Heart left ventricle (tissue), 16 donors: ENCODE measurements at regions of chr22 and their contacts with region 1.

Region 1: GRCh38 chr22:31496007-31496734 is at the start of gene SFI1:
- DNase-seq: peak; percentile 92 to 96 (median 93)
- ATAC-seq: peak; percentile 92 to 98 (median 97)
- H3K4me3 ChIP-seq: peak within 1 kb of the TSS; percentile 53 to 95 (median 84)
- H3K27ac ChIP-seq: peak within 1 kb of the TSS in 11 of 12 donors; percentile 65 to 93 (median 83)
- H3K4me1 ChIP-seq: peaks cover 2 to 28% (median 13%) of the 10 kb centered on the region in 12 donors
- H3K27me3 ChIP-seq: no peaks in the 10 kb centered on the region
- CTCF ChIP-seq: peak in 9 of 12 donors; percentile 14 to 59 (median 37)
- POLR2A ChIP-seq: peak in 1 of 2 donors; percentile 52
- total RNA-seq, gene SFI1: 2.2 to 18.3 (median 6.4) TPM

Region 2: DNA sequence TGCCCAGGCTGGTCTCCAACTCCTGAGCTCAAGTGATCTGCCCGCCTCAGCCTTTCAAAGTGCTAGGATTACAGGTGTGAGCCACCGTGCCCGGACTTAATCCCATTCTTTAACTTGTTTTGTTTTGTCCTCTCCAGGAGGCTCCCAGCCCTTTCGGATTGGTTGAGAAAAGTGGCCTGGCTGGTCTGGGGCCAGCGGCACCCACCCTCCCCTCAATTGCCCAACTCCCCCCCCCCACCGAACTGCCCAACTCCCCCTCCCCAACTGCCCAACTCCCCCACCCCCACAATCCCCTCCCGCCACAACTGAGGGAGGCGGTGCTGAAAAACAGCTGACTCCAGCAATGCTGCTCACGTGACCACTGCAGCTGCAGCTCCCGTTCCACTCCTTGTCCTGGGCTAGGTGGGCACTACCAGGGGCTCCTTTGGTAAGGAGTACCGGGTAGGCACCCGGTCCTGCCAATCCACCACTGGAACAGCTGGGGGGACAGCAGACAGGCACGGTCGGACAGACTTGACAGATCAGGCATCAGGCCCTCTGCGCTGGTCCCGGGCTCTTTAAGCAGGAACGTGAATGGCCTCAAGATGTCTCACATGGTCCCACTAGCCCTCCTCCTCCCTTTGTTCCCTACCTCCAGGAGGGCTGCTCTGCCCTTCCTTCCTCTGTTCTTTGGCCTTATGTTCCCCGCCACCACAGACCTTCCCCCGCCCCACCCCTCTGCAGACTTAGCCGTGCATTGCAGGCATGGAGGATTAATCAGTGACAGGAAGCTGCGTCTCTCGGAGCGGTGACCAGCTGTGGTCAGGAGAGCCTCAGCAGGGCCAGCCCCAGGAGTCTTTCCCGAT is 889.5 kb before region 1 on chr22 and contains the start of gene TCN2:
- intact Hi-C with region 1: loop called in 1 of 10 experiments (anchors 10 kb)
- DNase-seq: peak; percentile 72 to 80 (median 77)
- ATAC-seq: peak; percentile 81 to 90 (median 85)
- H3K4me3 ChIP-seq: peak within 1 kb of the TSS; percentile 30 to 80 (median 66)
- H3K27ac ChIP-seq: peak within 1 kb of the TSS; percentile 45 to 89 (median 80)
- H3K4me1 ChIP-seq: peaks cover 0 to 58% (median 34%) of the 10 kb centered on the region in 12 donors
- H3K27me3 ChIP-seq: no peaks in the 10 kb centered on the region
- CTCF ChIP-seq: no peak
- POLR2A ChIP-seq: peak in 1 of 2 donors; percentile 40
- total RNA-seq, gene TCN2: 11.2 to 69.9 (median 19.5) TPM

Region 3: GRCh38 chr22:31399211-31400028 is 96.8 kb before region 1 on chr22 and contains the start of gene DRG1:
- intact Hi-C with region 1: loop called in 1 of 10 experiments (anchors 5 kb)
- DNase-seq: peak; percentile 98 to 99 (median 99)
- ATAC-seq: peak; percentile 99 to 100 (median 100)
- H3K4me3 ChIP-seq: peak within 1 kb of the TSS; percentile 47 to 99 (median 81)
- H3K27ac ChIP-seq: peak within 1 kb of the TSS; percentile 47 to 93 (median 89)
- H3K4me1 ChIP-seq: peaks cover 3 to 22% (median 13%) of the 10 kb centered on the region in 12 donors
- H3K27me3 ChIP-seq: no peaks in the 10 kb centered on the region
- CTCF ChIP-seq: peak in 2 of 12 donors; percentile 11 to 17
- POLR2A ChIP-seq: peak; percentile 80 to 99
- total RNA-seq, gene DRG1: 50.1 to 88.0 (median 55.3) TPM

Region 4: DNA sequence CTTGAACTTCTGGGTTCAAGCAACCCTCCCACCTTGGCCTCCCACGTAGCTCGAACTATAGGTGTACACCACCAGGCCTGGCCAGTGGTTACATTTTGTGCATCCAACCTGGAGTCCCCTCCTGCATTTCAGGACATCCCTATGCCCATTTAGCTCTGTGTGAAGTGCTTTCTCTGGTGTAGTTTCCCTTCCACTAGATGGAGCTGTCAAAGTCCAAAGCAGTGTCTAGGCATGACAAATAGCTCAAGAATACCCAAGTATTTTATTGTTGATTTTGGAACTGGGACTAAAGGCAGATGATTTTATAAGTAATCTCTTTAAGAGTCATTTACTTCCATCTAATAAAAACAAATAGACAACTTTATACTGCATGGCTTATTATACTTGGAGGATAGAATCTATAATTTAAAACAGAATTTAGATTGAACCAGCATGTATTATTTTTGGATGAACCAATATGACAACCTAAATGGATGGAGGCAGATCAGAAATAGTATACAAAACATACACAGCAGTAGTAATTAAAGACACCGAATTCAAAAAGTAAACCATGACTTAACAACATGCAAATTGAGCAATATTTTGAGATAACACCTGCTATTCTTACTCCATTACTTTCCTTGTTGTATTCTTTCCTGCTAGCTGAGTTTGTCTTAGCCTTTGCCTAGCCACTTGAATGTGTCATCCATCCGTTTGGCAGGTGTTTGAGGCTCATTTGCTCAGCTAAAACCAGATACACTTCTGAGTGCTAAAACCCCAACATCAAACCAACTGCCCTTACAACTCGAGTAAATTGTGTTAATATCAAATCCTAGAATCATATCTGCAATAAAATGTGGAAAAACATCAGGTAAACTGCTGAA is 44.2 kb before region 1 on chr22:
- intact Hi-C with region 1: no loop called
- DNase-seq: no peak
- ATAC-seq: peak in 3 of 4 donors; percentile 30 to 49 (median 38)
- H3K4me3 ChIP-seq: no peak overlapping the region
- H3K27ac ChIP-seq: peak overlapping the region in 1 of 12 donors; percentile 9
- H3K4me1 ChIP-seq: peaks cover 0 to 38% (median 14%) of the 10 kb centered on the region in 12 donors
- H3K27me3 ChIP-seq: no peaks in the 10 kb centered on the region
- CTCF ChIP-seq: peak in 9 of 12 donors; percentile 21 to 48 (median 32)
- POLR2A ChIP-seq: no peak

Region 5: GRCh38 chr22:31630331-31631329 is 134.5 kb after region 1 on chr22:
- intact Hi-C with region 1: loop called in 4 of 10 experiments (anchors 5 to 10 kb)
- DNase-seq: peak; percentile 87 to 90 (median 88)
- ATAC-seq: peak; percentile 43 to 88 (median 87)
- H3K4me3 ChIP-seq: peak overlapping the region; percentile 63 to 95 (median 84)
- H3K27ac ChIP-seq: peak overlapping the region; percentile 81 to 98 (median 91)
- H3K4me1 ChIP-seq: peaks cover 3 to 64% (median 43%) of the 10 kb centered on the region in 12 donors
- H3K27me3 ChIP-seq: no peaks in the 10 kb centered on the region
- CTCF ChIP-seq: no peak
- POLR2A ChIP-seq: peak in 1 of 2 donors; percentile 23

Region 6: DNA sequence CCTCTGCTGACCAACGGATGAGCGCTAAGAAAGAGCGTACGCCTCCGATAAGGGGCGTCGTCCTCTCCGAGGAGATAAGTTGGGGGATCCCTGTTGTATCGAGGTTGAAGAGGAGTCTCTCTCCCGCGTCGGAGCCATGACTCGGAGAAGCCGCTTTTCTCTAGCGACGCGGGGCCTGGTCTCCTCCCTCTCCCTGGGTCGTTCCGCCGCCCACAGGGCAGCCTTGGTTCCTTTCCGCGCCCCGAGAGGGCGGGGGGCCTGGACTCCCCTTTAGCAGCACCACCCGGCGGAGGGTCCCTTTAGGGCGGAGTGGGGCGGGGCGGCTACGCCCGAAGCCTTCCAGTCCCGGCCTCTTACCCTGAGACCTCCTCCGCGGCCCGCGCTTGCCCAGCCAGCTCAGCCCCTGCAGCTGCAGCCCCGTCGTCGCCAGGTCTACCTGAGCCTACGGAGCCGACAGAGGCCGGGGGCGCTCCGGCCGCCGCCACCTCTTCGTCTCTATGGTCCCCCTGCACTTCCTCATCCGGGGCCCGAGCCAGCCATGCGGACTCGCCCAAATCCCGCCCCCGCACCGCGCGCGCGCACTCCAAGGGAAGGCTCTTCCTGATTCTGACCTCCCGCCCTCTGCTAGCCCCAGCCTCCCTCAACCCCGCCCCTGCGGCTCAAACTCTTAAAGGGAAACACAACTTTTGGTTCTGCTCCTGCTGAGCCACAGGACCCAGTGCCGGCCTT is 253.6 kb after region 1 on chr22 and contains the start of gene PRR14L:
- intact Hi-C with region 1: loop called in 1 of 10 experiments (anchors 10 kb)
- DNase-seq: peak; percentile 98 to 99 (median 99)
- ATAC-seq: peak; percentile 89 to 95 (median 94)
- H3K4me3 ChIP-seq: peak within 1 kb of the TSS; percentile 62 to 100 (median 86)
- H3K27ac ChIP-seq: peak within 1 kb of the TSS; percentile 73 to 95 (median 89)
- H3K4me1 ChIP-seq: peaks cover 3 to 54% (median 44%) of the 10 kb centered on the region in 12 donors
- H3K27me3 ChIP-seq: no peaks in the 10 kb centered on the region
- CTCF ChIP-seq: peak in 4 of 12 donors; percentile 12 to 24 (median 18)
- POLR2A ChIP-seq: peak in 1 of 2 donors; percentile 84
- total RNA-seq, gene PRR14L: 6.6 to 29.1 (median 15.1) TPM